GM10248 (cell line): ENCODE measurements at regions of chr19 and their contacts with region 1.

Region 1: DNA sequence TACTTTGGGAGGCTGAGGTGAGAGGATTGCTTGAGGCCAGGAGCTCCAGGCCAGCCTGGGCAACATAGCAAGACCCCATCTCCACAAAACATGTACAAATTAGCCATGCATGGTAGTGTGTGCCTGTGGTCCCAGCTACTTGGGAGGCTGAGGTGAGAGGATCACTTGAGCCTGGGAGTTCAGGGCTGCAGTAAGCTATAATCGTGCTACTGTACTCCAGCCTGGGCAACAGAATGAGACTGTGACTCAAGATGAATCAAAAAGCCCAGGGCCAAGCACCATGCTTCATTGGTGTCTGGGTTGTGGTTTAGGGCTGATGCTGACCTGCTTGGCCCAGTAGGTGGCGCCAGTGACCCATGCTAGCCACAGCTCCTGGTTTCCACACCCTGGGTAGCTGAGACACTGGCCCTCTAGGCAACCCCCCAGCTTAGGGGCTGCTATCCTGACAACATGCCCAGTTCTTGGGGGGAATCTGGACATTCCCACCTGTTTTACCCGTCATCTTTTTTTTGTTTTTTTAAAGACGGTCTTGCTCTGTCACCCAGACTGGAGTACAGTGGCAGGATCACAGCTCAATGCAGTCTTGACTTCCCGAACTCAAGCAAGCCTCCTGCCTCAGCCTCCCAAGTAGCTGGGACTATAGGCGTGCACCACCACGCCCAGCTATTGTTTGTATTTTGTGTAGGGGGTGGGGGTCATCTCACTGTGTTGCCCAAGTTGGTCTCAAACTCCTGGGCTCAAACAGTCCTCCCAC is 5.5 kb downstream of the CCDC124 start:
- DNase-seq: peak; percentile 88
- CTCF ChIP-seq: peak; percentile 98

Region 2: DNA sequence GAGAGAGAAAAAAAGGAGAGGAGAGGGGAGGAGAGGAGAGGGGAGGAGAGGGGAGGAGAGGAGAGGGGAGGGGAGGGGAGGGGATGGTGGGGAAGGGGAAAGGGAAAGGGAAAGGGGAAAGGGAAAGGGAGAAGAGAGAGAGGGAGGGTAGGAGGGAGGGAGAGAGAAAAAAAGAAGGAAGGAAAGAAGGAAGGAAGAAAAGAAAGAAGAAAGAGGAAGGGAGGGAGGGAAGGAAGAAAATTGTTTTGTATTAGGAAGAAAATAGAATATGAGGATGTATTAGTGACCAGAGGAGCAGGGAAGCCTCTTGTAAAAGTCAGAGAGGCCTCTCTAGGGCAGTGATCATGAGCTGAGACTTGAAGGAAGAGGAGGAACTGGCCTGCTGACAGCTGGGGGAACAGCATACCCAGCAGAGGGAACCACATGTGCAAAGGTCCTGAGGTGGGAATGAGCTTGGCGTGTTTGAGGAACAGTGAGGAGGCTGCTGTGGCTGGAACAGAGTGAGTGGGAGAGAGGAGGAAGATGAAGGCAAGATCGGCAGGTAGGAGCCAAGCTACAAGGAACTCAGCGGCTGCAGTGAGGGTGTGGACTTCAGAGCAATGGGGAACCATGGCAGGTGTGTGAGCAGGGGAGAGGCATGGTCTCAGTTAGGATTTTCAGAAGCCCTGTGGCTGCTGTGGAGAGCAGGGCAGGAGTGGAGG is 19.0 kb after region 1 on chr19:
- CTCF ChIA-PET with region 1: interaction called, 21 read pairs
- POLR2A ChIA-PET with region 1: no interaction called
- DNase-seq: no peak
- CTCF ChIP-seq: no peak

Region 3: GRCh38 chr19:18007044-18007916 is 69.0 kb after region 1 on chr19:
- CTCF ChIA-PET with region 1: interaction called, 110 read pairs
- POLR2A ChIA-PET with region 1: no interaction called
- DNase-seq: peak; percentile 87
- CTCF ChIP-seq: peak; percentile 99

Region 4: GRCh38 chr19:18058208-18059030 is 120.2 kb after region 1 on chr19:
- CTCF ChIA-PET with region 1: interaction called, 46 read pairs
- POLR2A ChIA-PET with region 1: no interaction called
- DNase-seq: peak; percentile 91
- CTCF ChIP-seq: peak; percentile 83

Region 5: DNA sequence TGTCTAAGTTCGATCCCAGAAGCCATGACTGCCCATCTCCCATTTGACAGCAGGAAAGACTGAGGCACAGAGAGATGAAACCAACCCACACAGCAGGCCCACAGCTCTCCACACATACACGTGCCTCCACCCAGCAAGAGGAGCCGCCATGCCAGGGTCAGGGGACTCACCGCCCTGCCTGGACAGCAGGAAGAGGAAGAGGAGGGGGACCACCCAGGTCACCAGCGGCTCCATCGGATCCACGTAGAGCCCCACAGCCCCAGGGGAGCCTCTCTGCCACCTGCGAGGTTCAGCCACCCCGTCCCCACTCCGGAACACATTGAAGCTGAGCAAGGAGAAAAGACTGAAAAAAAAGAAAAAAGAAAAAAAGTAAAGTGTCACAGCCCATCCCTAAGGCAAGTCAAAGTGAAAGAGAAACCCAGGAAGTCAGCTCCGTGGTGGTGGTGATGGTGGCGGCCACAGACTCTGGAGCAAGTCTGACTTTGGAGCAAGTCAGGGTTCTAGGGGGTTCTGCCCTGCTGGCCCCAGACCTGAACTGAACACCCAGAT is 148.4 kb after region 1 on chr19 and contains the start of gene IL12RB1:
- CTCF ChIA-PET with region 1: no interaction called
- POLR2A ChIA-PET with region 1: no interaction called
- DNase-seq: peak; percentile 66
- CTCF ChIP-seq: no peak